Colonic mucosa (tissue), 4 donors: ENCODE measurements at regions of chr3 and their contacts with region 1.

Region 1: GRCh38 chr3:128095222-128095703 is 28.3 kb downstream of the RUVBL1 start:
- DNase-seq: peak; percentile 84
- H3K4me3 ChIP-seq: no peak overlapping the region
- H3K27ac ChIP-seq: no peak overlapping the region
- H3K4me1 ChIP-seq: no peaks in the 10 kb centered on the region
- H3K27me3 ChIP-seq: no peaks in the 10 kb centered on the region
- CTCF ChIP-seq: peak; percentile 64

Region 2: DNA sequence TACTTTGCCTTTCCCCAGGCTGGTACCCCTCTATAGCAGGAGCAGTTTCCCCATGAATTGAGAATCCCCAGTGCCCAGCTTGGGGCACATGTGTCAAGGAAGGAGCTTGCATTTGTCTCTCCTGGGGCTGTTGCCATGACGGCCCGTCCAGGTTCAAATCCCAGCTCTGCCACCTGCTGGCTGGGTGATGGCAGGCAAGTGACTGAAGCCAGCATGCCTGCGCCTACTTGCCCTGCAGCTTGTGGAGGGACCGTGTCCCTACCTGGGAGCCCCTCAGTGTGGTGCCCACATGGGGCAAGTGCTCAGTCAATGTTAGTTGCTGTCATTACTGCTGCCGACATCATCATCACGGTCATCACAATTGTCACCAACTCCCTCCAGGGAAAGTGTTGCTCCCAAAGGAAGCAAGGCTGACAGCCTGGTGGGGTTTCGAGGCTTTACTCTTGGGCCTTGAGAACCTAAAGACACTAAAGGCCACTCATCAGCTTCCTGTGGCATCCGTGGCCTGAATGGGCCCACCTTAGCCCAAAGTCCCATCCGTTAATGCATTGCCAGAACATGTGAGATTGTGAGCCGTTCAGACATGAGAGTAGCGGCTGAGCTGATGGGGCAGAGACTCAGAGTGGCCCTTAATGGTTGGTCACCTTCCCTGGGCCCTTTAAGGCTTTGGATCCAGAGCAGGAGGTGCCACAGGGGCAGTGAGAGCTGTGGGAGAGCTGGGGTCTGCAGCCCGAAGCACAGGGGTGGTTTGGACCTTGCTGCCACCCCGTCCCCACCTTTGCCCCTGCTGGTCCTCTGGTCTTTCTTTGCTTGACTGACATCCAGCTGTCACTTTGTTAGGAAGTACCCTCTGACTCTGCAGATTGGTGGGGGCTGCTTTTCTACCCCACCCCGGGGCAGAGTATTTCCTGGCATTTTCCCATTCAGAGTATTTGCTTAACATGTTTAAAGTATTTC is 227.1 kb after region 1 on chr3:
- intact Hi-C with region 1: loop called (anchors 10 kb)
- DNase-seq: peak; percentile 53
- H3K4me3 ChIP-seq: no peak overlapping the region
- H3K27ac ChIP-seq: no peak overlapping the region
- H3K4me1 ChIP-seq: no peaks in the 10 kb centered on the region
- H3K27me3 ChIP-seq: no peaks in the 10 kb centered on the region
- CTCF ChIP-seq: peak; percentile 54

Region 3: GRCh38 chr3:128497387-128498126 is 402.3 kb after region 1 on chr3:
- intact Hi-C with region 1: loop called (anchors 5 kb)
- DNase-seq: peak; percentile 73
- H3K4me3 ChIP-seq: peak overlapping the region; percentile 35
- H3K27ac ChIP-seq: no peak overlapping the region
- H3K4me1 ChIP-seq: peaks cover 13% of the 10 kb centered on the region
- H3K27me3 ChIP-seq: peaks cover 47% of the 10 kb centered on the region
- CTCF ChIP-seq: peak; percentile 55

Region 4: GRCh38 chr3:128607710-128608048 is 512.4 kb after region 1 on chr3:
- intact Hi-C with region 1: loop called (anchors 10 kb)
- DNase-seq: no peak
- H3K4me3 ChIP-seq: peak overlapping the region; percentile 64
- H3K27ac ChIP-seq: no peak overlapping the region
- H3K4me1 ChIP-seq: no peaks in the 10 kb centered on the region
- H3K27me3 ChIP-seq: no peaks in the 10 kb centered on the region
- CTCF ChIP-seq: no peak